PC-9 (cell line): ENCODE measurements at regions of chr9 and their contacts with region 1.

Region 1: DNA sequence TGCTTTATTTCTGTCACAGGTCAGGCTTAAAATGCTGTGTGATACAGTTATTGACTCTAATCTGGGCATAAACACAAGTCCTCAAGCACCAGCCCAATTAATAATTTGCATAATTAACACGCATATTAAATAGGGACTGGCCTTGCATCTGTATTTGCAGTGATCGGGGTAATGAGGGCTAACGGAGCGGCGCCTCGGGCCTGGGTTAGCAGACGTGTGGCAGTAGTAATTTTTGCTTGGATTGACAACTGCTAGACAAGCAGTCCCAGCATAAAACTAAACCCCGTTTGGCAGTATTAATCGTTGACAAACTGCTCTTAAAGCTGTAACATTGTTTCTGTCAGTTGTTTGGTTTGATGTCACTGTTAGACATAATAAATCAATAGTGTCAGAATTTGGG is 109.2 kb downstream of the PBX3 start:
- DNase-seq: no peak
- H3K4me3 ChIP-seq: no peak overlapping the region
- H3K27ac ChIP-seq: no peak overlapping the region
- H3K4me1 ChIP-seq: peaks cover 9% of the 10 kb centered on the region; the same call in 1 of the 2 replicates
- H3K27me3 ChIP-seq: no peaks in the 10 kb centered on the region
- CTCF ChIP-seq: no peak

Region 2: DNA sequence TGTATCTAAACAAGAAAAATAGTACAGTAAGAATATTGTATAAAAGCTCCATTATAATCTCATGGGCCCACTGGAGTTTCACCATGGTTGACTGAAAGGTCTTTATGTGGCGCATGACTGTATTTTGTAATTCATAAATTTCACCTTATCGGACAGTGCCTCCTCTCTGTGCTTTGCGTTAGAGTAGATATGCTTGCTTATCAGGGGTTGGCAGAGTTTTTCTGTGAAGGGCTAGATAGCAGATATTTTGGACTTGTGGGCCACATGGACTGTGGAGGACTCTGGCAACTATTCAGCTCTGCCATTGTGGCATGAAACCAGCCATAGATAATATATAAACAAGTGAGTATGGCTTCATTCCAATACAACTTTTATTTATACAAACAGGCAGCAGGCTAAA is 571.5 kb before region 1 on chr9:
- CTCF ChIA-PET with region 1: interaction called, 14 read pairs
- POLR2A ChIA-PET with region 1: no interaction called
- intact Hi-C with region 1: no loop called
- DNase-seq: no peak
- H3K4me3 ChIP-seq: no peak overlapping the region
- H3K27ac ChIP-seq: no peak overlapping the region
- H3K4me1 ChIP-seq: peaks cover 12% of the 10 kb centered on the region
- H3K27me3 ChIP-seq: no peaks in the 10 kb centered on the region
- CTCF ChIP-seq: no peak

Region 3: GRCh38 chr9:125887172-125887571 is 30.8 kb after region 1 on chr9:
- CTCF ChIA-PET with region 1: no interaction called
- POLR2A ChIA-PET with region 1: no interaction called
- intact Hi-C with region 1: no loop called
- DNase-seq: peak in 1 of 2 experiments; percentile 63
- H3K4me3 ChIP-seq: no peak overlapping the region
- H3K27ac ChIP-seq: no peak overlapping the region
- H3K4me1 ChIP-seq: peaks cover 10% of the 10 kb centered on the region; the same call in 1 of the 2 replicates
- H3K27me3 ChIP-seq: no peaks in the 10 kb centered on the region
- CTCF ChIP-seq: no peak

Region 4: DNA sequence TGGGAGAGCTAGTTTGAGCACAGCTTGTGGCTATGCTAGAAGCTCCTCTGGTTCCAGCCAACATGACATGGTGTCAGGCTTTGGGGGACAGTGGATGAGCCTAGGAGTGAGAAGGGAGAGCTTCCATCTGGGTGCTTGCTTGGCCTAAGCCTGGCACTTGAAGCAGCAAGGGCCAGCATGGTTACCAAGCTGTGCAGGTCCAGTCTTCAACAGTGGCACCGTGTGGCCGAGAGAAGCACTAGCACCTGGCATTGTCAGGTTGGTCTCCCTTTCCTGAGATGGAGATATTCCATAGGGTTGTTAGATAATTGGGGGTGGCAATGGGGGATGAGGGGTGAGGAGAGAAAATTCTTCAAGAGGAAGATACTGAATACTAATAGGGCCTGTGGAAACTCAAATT is 152.7 kb after region 1 on chr9:
- CTCF ChIA-PET with region 1: no interaction called
- POLR2A ChIA-PET with region 1: no interaction called
- intact Hi-C with region 1: no loop called
- DNase-seq: no peak
- H3K4me3 ChIP-seq: no peak overlapping the region
- H3K27ac ChIP-seq: no peak overlapping the region
- H3K4me1 ChIP-seq: no peaks in the 10 kb centered on the region
- H3K27me3 ChIP-seq: peaks cover 37% of the 10 kb centered on the region; the same call in 1 of the 2 replicates
- CTCF ChIP-seq: peak; percentile 47; the same call in 1 of the 2 replicates